ENCODE measurements at regions of chr3 and their contacts with region 1.

Region 1: DNA sequence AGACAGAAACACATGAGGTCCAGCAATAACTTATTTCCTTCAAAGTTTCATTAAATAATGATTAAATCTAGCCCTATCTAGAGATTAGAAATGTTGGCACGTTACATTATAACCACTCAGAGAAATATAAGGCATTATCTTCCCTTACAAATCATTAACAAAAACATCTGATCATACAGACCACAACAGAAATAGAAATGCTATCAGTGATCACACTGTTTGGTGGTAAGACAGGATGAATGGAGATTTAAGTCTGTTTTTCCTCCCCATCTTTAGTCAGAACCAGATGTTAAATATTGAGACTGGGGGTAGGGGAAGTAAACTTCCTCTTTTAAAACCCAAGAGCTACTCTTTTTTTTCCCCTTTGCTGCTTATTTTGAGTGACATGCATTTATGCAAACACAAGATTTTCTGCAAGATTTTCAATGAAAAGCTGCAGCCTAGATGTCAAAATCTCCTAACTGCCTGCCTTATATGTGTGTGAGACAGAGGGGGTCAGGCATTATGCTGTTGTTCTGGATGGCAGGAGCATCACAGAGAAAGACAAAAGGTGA is 70.4 kb downstream of the CBLB start:
- DNase-seq: peak; percentile 71
- ATAC-seq: peak; percentile 86
- H3K4me3 ChIP-seq: peak overlapping the region in 1 of 5 experiments; percentile 28
- H3K4me3 Mint-ChIP-seq: peak overlapping the region; percentile 66
- H3K27ac ChIP-seq: peak overlapping the region in 1 of 2 donors; percentile 53
- H3K27ac Mint-ChIP-seq: peak overlapping the region; percentile 70
- H3K4me1 ChIP-seq: peaks cover 37 to 61% of the 10 kb centered on the region in 2 donors
- H3K4me1 Mint-ChIP-seq: peaks cover 66% of the 10 kb centered on the region
- H3K27me3 ChIP-seq: no peaks in the 10 kb centered on the region
- H3K27me3 Mint-ChIP-seq: no peaks in the 10 kb centered on the region
- CTCF ChIP-seq: no peak

Region 2: GRCh38 chr3:105722943-105723556 is 75.4 kb before region 1 on chr3:
- CTCF ChIA-PET with region 1: no interaction called
- POLR2A ChIA-PET with region 1: no interaction called
- intact Hi-C with region 1: loop called (anchors 1 kb)
- DNase-seq: peak; percentile 77
- ATAC-seq: peak; percentile 96
- H3K4me3 ChIP-seq: peak overlapping the region in 1 of 5 experiments; percentile 29
- H3K4me3 Mint-ChIP-seq: peak overlapping the region; percentile 26
- H3K27ac ChIP-seq: peak overlapping the region in 1 of 2 donors; percentile 35
- H3K27ac Mint-ChIP-seq: peak overlapping the region; percentile 51
- H3K4me1 ChIP-seq: peaks cover 4 to 15% of the 10 kb centered on the region in 2 donors
- H3K4me1 Mint-ChIP-seq: peaks cover 18% of the 10 kb centered on the region
- H3K27me3 ChIP-seq: no peaks in the 10 kb centered on the region
- H3K27me3 Mint-ChIP-seq: no peaks in the 10 kb centered on the region
- CTCF ChIP-seq: no peak

Region 3: GRCh38 chr3:105752744-105753415 is 45.6 kb before region 1 on chr3:
- CTCF ChIA-PET with region 1: no interaction called
- POLR2A ChIA-PET with region 1: no interaction called
- intact Hi-C with region 1: loop called (anchors 5 kb)
- DNase-seq: peak; percentile 43
- ATAC-seq: peak; percentile 70
- H3K4me3 ChIP-seq: peak overlapping the region in 1 of 5 experiments; percentile 12
- H3K4me3 Mint-ChIP-seq: peak overlapping the region; percentile 68
- H3K27ac ChIP-seq: peak overlapping the region; percentile 69 to 82
- H3K27ac Mint-ChIP-seq: peak overlapping the region; percentile 88
- H3K4me1 ChIP-seq: peaks cover 36 to 46% of the 10 kb centered on the region in 2 donors
- H3K4me1 Mint-ChIP-seq: peaks cover 50% of the 10 kb centered on the region
- H3K27me3 ChIP-seq: no peaks in the 10 kb centered on the region
- H3K27me3 Mint-ChIP-seq: no peaks in the 10 kb centered on the region
- CTCF ChIP-seq: no peak

Region 4: GRCh38 chr3:105764378-105765307 is 33.8 kb before region 1 on chr3:
- CTCF ChIA-PET with region 1: interaction called, 3 read pairs
- POLR2A ChIA-PET with region 1: no interaction called
- intact Hi-C with region 1: loop called (anchors 5 kb)
- DNase-seq: peak; percentile 34
- ATAC-seq: peak; percentile 33
- H3K4me3 ChIP-seq: no peak overlapping the region
- H3K4me3 Mint-ChIP-seq: peak overlapping the region; percentile 33
- H3K27ac ChIP-seq: peak overlapping the region; percentile 30 to 43
- H3K27ac Mint-ChIP-seq: peak overlapping the region; percentile 66
- H3K4me1 ChIP-seq: peaks cover 31 to 33% of the 10 kb centered on the region in 2 donors
- H3K4me1 Mint-ChIP-seq: peaks cover 43% of the 10 kb centered on the region
- H3K27me3 ChIP-seq: no peaks in the 10 kb centered on the region
- H3K27me3 Mint-ChIP-seq: no peaks in the 10 kb centered on the region
- CTCF ChIP-seq: no peak

Region 5: DNA sequence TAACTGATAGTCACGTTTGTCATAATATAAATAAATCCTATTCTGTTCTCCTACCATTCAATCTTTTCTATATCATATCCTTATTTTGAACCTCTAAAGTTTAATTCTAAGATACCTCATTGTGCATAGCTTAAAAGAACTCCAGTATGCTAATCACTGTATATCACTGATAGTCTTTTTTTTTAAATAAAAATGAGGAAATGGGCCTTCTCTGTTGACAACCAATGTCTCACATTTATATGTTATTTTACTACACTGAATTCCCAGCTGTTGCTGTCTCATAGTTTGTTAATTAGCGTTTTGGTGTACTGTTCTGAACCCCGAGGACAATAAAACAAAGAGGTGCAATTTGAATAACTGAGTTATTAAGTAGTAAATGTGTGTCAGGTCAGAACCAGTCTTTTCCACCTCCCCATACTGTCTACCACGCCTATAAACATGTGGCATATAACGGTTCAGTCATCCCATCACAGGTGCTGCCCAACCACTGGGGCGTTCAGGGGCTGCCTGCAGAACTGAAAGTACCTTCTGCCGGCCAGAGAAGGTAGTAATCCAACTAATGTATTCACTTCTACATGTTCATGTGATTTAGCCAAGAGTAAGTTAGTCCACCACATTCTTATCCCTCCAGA is 55.5 kb after region 1 on chr3:
- CTCF ChIA-PET with region 1: no interaction called
- POLR2A ChIA-PET with region 1: no interaction called
- intact Hi-C with region 1: loop called (anchors 2 kb)
- DNase-seq: peak; percentile 91
- ATAC-seq: peak; percentile 99
- H3K4me3 ChIP-seq: peak overlapping the region in 1 of 5 experiments; percentile 5
- H3K4me3 Mint-ChIP-seq: peak overlapping the region; percentile 74
- H3K27ac ChIP-seq: peak overlapping the region; percentile 94 to 95
- H3K27ac Mint-ChIP-seq: peak overlapping the region; percentile 97
- H3K4me1 ChIP-seq: peaks cover 43 to 49% of the 10 kb centered on the region in 2 donors
- H3K4me1 Mint-ChIP-seq: peaks cover 53% of the 10 kb centered on the region
- H3K27me3 ChIP-seq: no peaks in the 10 kb centered on the region
- H3K27me3 Mint-ChIP-seq: no peaks in the 10 kb centered on the region
- CTCF ChIP-seq: peak; percentile 20